B cell (primary cell): ENCODE measurements at regions of chr7 and their contacts with region 1.

Region 1: GRCh38 chr7:21427182-21427870 is 557 bp upstream of the SP4 start:
- DNase-seq: peak; percentile 99
- ATAC-seq: peak; percentile 75
- H3K4me3 ChIP-seq: peak overlapping the region; percentile 83 to 98 (median 92)
- H3K4me3 Mint-ChIP-seq: peak overlapping the region; percentile 99
- H3K27ac ChIP-seq: peak overlapping the region; percentile 89 to 96
- H3K27ac Mint-ChIP-seq: peak overlapping the region; percentile 99
- H3K4me1 ChIP-seq: peaks cover 37 to 40% of the 10 kb centered on the region in 2 donors
- H3K4me1 Mint-ChIP-seq: peaks cover 49% of the 10 kb centered on the region
- H3K27me3 ChIP-seq: no peaks in the 10 kb centered on the region
- H3K27me3 Mint-ChIP-seq: no peaks in the 10 kb centered on the region
- CTCF ChIP-seq: no peak

Region 2: GRCh38 chr7:20114468-20114867 is 1312.9 kb before region 1 on chr7:
- CTCF ChIA-PET with region 1: no interaction called
- POLR2A ChIA-PET with region 1: no interaction called
- intact Hi-C with region 1: loop called (anchors 5 kb)
- DNase-seq: peak; percentile 85
- ATAC-seq: peak; percentile 91
- H3K4me3 ChIP-seq: no peak overlapping the region
- H3K4me3 Mint-ChIP-seq: peak overlapping the region; percentile 60
- H3K27ac ChIP-seq: peak overlapping the region in 1 of 2 donors; percentile 62
- H3K27ac Mint-ChIP-seq: peak overlapping the region; percentile 69
- H3K4me1 ChIP-seq: peaks cover 19 to 23% of the 10 kb centered on the region in 2 donors
- H3K4me1 Mint-ChIP-seq: peaks cover 23% of the 10 kb centered on the region
- H3K27me3 ChIP-seq: no peaks in the 10 kb centered on the region
- H3K27me3 Mint-ChIP-seq: no peaks in the 10 kb centered on the region
- CTCF ChIP-seq: peak; percentile 27

Region 3: DNA sequence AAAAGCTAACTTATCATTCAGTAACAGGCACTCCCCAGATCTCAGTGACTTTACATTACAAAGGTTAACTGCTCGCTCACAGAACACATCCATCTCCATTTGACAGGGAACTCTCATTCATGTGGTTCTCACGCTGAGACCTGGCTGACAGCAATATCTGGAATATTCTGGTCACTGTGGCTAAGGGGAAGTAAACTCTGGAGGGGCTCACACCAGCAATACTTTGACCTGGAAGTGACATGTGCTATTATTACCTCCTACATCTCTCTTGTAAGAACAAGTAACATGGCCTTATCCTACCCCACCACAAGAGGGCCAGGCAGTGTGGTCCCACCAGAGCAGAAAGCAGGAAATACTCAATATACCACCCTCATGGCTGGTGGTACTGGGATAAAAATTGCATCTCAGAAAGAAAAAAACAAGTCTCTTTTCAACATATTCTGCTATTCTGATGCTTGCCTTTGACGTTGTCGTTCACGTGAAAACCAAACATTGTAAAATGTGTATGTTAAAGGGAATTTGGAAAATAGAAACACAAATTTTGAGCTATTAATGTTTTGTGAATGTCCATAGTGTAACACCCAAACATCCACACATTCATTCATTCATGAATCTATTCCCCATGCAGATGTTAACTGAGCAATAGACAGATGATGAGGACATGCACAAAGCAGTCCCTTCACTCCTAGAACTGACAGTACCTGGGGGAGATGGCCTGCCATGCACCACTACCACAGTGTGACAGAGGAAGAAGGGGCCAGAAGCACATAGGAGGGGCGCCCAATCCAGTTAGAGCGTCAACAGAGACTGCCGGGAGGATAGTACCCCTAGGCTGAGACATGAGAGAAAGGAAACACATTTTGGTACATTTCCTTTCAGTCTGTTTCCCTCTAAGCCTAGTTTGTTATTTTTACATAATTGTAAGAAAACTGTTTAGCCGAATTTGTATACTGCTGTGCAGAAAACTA is 165.4 kb before region 1 on chr7:
- CTCF ChIA-PET with region 1: interaction called, 17 read pairs
- POLR2A ChIA-PET with region 1: no interaction called
- intact Hi-C with region 1: loop called (anchors 2 kb)
- DNase-seq: peak; percentile 73
- ATAC-seq: peak; percentile 93
- H3K4me3 ChIP-seq: no peak overlapping the region
- H3K4me3 Mint-ChIP-seq: peak overlapping the region; percentile 14
- H3K27ac ChIP-seq: peak overlapping the region in 1 of 2 donors; percentile 28
- H3K27ac Mint-ChIP-seq: peak overlapping the region; percentile 67
- H3K4me1 ChIP-seq: peaks cover 12% of the 10 kb centered on the region in 2 donors
- H3K4me1 Mint-ChIP-seq: peaks cover 14% of the 10 kb centered on the region
- H3K27me3 ChIP-seq: no peaks in the 10 kb centered on the region
- H3K27me3 Mint-ChIP-seq: no peaks in the 10 kb centered on the region
- CTCF ChIP-seq: peak; percentile 73

Region 4: GRCh38 chr7:21945454-21946227 is 518.3 kb after region 1 on chr7 and contains the start of gene CDCA7L:
- CTCF ChIA-PET with region 1: no interaction called
- POLR2A ChIA-PET with region 1: interaction called, 9 read pairs
- intact Hi-C with region 1: loop called (anchors 1 kb)
- DNase-seq: peak; percentile 96
- ATAC-seq: peak; percentile 80
- H3K4me3 ChIP-seq: peak within 1 kb of the TSS; percentile 74 to 95 (median 81)
- H3K4me3 Mint-ChIP-seq: peak within 1 kb of the TSS; percentile 97
- H3K27ac ChIP-seq: peak within 1 kb of the TSS; percentile 97 to 98
- H3K27ac Mint-ChIP-seq: peak within 1 kb of the TSS; percentile 99
- H3K4me1 ChIP-seq: peaks cover 56 to 63% of the 10 kb centered on the region in 2 donors
- H3K4me1 Mint-ChIP-seq: peaks cover 65% of the 10 kb centered on the region
- H3K27me3 ChIP-seq: no peaks in the 10 kb centered on the region
- H3K27me3 Mint-ChIP-seq: no peaks in the 10 kb centered on the region
- CTCF ChIP-seq: peak; percentile 17
- total RNA-seq, gene CDCA7L: 126 and 129 TPM in 2 replicates

Region 5: DNA sequence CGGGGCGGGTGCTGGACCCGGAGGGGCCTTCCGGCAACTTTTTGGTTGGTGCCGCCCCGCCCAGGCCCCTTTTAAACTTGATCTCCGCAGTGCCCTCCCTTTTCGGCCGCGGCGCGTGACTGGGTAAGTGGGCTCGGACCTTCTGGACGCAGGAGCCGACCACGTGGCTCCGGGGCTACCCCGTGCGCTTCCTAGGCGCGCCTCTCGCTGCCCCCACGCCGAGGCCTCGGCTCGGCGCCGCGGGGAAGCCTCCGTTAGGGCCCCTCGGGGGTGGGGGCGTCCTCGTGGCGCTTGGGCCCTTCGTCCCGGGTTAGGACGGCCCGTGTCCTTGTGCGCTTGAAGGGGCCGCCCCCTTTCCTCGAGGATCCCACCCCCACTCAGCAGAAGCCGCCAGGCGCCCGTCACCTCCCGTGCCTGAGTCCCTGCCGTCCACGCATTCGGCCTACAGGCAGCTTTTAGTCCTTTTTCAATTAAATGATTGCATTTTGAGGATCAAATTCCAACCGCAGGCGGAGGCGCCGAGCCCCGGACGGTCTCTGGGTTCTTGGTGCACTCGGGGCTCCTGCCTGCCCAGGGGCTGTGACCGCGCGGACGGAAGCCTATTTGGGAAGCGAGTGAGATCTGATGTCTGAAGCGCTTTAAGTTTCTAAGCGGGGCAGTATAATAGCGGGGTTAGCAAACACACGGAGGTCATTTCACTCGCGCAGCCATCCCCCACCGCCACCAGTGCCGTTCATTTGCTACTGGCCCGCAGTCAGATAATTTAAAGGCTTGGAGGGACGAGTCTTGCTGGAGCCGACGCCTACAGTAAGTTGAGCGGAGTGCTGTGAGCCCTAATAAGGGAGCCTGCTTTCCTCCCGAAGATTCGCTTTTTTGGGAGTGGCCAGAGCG is 1427.1 kb after region 1 on chr7:
- CTCF ChIA-PET with region 1: no interaction called
- POLR2A ChIA-PET with region 1: no interaction called
- intact Hi-C with region 1: loop called (anchors 5 kb)
- DNase-seq: peak; percentile 88
- ATAC-seq: peak; percentile 83
- H3K4me3 ChIP-seq: peak overlapping the region; percentile 74 to 87 (median 80)
- H3K4me3 Mint-ChIP-seq: peak overlapping the region; percentile 97
- H3K27ac ChIP-seq: peak overlapping the region; percentile 71 to 87
- H3K27ac Mint-ChIP-seq: peak overlapping the region; percentile 94
- H3K4me1 ChIP-seq: peaks cover 17 to 27% of the 10 kb centered on the region in 2 donors
- H3K4me1 Mint-ChIP-seq: peaks cover 38% of the 10 kb centered on the region
- H3K27me3 ChIP-seq: no peaks in the 10 kb centered on the region
- H3K27me3 Mint-ChIP-seq: no peaks in the 10 kb centered on the region
- CTCF ChIP-seq: peak; percentile 84